Activated CD8-positive, alpha-beta T cell treated with anti-CD3 and anti-CD28 coated beads for 36 hours (primary cell): ENCODE measurements at regions of chr6 and their contacts with region 1.

Region 1: GRCh38 chr6:37516076-37516919 is 16.6 kb upstream of the CCDC167 start:
- DNase-seq: peak; percentile 97
- ATAC-seq: peak; percentile 78
- H3K4me3 Mint-ChIP-seq: peak overlapping the region; percentile 78
- H3K27ac Mint-ChIP-seq: peak overlapping the region; percentile 97
- H3K4me1 Mint-ChIP-seq: peaks cover 82% of the 10 kb centered on the region
- H3K27me3 Mint-ChIP-seq: no peaks in the 10 kb centered on the region
- CTCF ChIP-seq: no peak

Region 2: DNA sequence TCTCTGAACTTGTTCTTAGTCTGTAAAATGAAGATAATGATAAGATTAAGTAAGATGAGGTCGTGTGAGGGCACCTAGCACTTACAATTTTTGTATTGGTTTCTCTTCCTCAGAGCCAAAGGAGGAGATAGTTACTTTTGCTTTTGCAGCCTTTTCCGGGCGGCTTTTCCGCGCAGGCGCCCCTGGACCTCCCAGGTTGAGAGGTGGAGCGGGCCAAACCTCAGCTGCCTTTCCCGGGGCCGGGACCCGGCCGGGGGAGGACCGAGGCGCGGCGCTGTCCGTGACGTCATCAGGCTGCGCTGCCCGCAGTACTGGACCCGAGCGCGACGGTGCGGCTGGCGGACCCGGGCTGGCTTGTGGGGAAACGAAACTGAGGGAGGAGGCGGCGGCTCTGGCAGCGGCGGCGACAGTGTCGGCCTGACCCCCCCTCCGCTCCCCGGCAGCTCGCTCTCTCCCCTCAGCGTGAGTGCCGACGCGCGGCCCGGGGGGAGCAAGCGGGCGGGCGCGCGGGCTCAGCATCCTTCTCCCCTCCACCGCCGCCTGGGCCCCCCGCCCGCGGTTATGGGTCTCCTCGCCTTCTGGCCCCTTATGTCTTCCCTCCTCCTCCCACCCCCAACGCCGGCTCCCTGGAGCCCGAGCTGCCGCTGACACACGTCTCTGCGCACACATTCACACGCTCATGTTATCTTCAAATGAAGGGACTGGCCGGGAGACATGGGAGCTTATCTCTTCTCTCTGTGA is 83.2 kb before region 1 on chr6 and contains the start of gene CMTR1:
- CTCF ChIA-PET with region 1: no interaction called
- POLR2A ChIA-PET with region 1: interaction called, 13 read pairs
- intact Hi-C with region 1: no loop called
- DNase-seq: peak; percentile 96
- ATAC-seq: peak; percentile 91
- H3K4me3 Mint-ChIP-seq: peak within 1 kb of the TSS; percentile 92
- H3K27ac Mint-ChIP-seq: peak within 1 kb of the TSS; percentile 96
- H3K4me1 Mint-ChIP-seq: peaks cover 38% of the 10 kb centered on the region
- H3K27me3 Mint-ChIP-seq: peaks cover 3% of the 10 kb centered on the region
- CTCF ChIP-seq: no peak
- total RNA-seq, gene CMTR1: 49.9 to 50.6 TPM

Region 3: DNA sequence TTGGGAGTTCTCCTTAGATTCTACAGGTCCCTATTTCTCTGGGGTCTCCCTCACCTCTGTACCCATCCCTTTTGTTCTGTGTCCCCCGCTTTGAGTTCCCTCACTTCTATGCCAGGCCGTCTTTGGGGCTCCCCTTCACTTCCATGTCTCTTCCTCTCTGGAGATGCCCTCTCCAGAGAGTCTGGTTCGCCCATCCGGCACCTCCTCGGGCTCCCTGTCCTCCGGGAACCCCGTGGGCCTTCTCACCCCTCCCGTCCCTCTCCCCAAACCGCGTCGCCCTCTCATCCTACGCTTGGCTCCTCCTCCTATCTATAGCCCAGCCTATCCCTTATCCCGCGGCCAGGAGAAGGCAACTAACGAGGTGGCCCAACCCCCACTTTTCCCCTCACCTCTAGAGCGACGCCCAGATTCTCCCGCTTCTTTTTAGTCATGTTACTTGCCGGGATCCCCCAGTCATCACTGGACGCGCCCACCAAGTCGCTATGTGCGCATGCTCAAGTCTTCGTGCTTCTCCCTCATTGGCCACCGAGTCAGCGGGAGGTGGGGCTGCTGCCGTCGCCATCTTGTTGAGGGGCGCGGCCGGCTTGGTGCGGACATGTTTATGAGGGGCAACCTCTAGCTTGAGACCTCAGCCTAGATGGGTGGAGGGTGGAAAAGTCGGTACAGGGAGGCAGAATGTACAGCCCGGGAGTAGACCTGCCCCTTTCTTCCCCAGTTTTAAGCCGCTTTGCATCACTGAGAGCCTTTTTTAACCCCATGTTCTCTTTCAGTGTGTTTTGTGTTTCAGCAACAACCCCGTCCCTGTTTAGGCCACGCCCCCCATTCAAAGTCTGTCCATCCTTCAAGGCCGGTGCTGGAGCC is 16.6 kb before region 1 on chr6 and contains the start of gene CCDC167:
- CTCF ChIA-PET with region 1: interaction called, 33 read pairs
- POLR2A ChIA-PET with region 1: interaction called, 109 read pairs
- intact Hi-C with region 1: no loop called
- DNase-seq: peak; percentile 99
- ATAC-seq: peak; percentile 86
- H3K4me3 Mint-ChIP-seq: peak within 1 kb of the TSS; percentile 92
- H3K27ac Mint-ChIP-seq: peak within 1 kb of the TSS; percentile 99
- H3K4me1 Mint-ChIP-seq: peaks cover 87% of the 10 kb centered on the region
- H3K27me3 Mint-ChIP-seq: no peaks in the 10 kb centered on the region
- CTCF ChIP-seq: no peak
- total RNA-seq, gene CCDC167: 63.7 to 68.1 TPM

Region 4: GRCh38 chr6:37538107-37538506 is 21.8 kb after region 1 on chr6:
- CTCF ChIA-PET with region 1: interaction called, 5 read pairs
- POLR2A ChIA-PET with region 1: interaction called, 17 read pairs
- intact Hi-C with region 1: no loop called
- DNase-seq: no peak
- ATAC-seq: no peak
- H3K4me3 Mint-ChIP-seq: no peak overlapping the region
- H3K27ac Mint-ChIP-seq: no peak overlapping the region
- H3K4me1 Mint-ChIP-seq: peaks cover 35% of the 10 kb centered on the region
- H3K27me3 Mint-ChIP-seq: no peaks in the 10 kb centered on the region
- CTCF ChIP-seq: no peak

Region 5: GRCh38 chr6:37554480-37554819 is 38.2 kb after region 1 on chr6:
- CTCF ChIA-PET with region 1: interaction called, 6 read pairs
- POLR2A ChIA-PET with region 1: interaction called, 22 read pairs
- intact Hi-C with region 1: loop called (anchors 5 kb)
- DNase-seq: no peak
- ATAC-seq: no peak
- H3K4me3 Mint-ChIP-seq: no peak overlapping the region
- H3K27ac Mint-ChIP-seq: peak overlapping the region; percentile 40
- H3K4me1 Mint-ChIP-seq: peaks cover 30% of the 10 kb centered on the region
- H3K27me3 Mint-ChIP-seq: no peaks in the 10 kb centered on the region
- CTCF ChIP-seq: no peak

Region 6: DNA sequence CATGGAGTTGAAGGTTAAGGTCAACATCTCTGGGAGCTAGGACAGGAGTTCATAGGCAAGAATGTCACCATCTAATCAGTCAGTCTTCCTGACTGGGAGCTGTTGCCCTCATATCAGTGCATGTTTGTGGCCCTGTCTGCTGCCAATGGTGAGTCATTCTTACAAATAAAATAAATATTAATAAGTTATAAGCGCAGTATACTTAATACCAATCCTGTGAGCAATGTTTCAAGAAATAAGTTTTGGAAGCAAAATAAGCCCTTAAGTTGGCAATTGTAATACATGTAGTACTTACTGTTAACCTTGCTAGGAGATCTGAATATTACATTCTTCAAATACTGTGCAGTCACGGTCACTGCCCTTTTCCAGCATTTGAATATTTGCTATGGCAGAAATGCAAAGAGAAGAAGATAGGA is 201.5 kb after region 1 on chr6:
- CTCF ChIA-PET with region 1: no interaction called
- POLR2A ChIA-PET with region 1: no interaction called
- intact Hi-C with region 1: no loop called
- DNase-seq: no peak
- ATAC-seq: no peak
- H3K4me3 Mint-ChIP-seq: no peak overlapping the region
- H3K27ac Mint-ChIP-seq: no peak overlapping the region
- H3K4me1 Mint-ChIP-seq: peaks cover 4% of the 10 kb centered on the region
- H3K27me3 Mint-ChIP-seq: peaks cover 5% of the 10 kb centered on the region
- CTCF ChIP-seq: no peak